ENCODE measurements at regions of chr6 and their contacts with region 1.

Region 1: GRCh38 chr6:5517796-5518195 is 256.5 kb downstream of the FARS2 start:
- DNase-seq: peak; percentile 72
- H3K4me3 Mint-ChIP-seq: no peak overlapping the region
- H3K27ac Mint-ChIP-seq: peak overlapping the region; percentile 53
- H3K4me1 Mint-ChIP-seq: peaks cover 60% of the 10 kb centered on the region
- H3K27me3 Mint-ChIP-seq: no peaks in the 10 kb centered on the region

Region 2: GRCh38 chr6:5278047-5278446 is 239.7 kb before region 1 on chr6:
- CTCF ChIA-PET with region 1: no interaction called
- intact Hi-C with region 1: no loop called
- DNase-seq: no peak
- H3K4me3 Mint-ChIP-seq: no peak overlapping the region
- H3K27ac Mint-ChIP-seq: peak overlapping the region; percentile 9
- H3K4me1 Mint-ChIP-seq: peaks cover 39% of the 10 kb centered on the region
- H3K27me3 Mint-ChIP-seq: no peaks in the 10 kb centered on the region

Region 3: GRCh38 chr6:5481033-5481432 is 36.8 kb before region 1 on chr6:
- CTCF ChIA-PET with region 1: no interaction called
- intact Hi-C with region 1: no loop called
- DNase-seq: no peak
- H3K4me3 Mint-ChIP-seq: no peak overlapping the region
- H3K27ac Mint-ChIP-seq: no peak overlapping the region
- H3K4me1 Mint-ChIP-seq: peaks cover 2% of the 10 kb centered on the region
- H3K27me3 Mint-ChIP-seq: no peaks in the 10 kb centered on the region

Region 4: GRCh38 chr6:5566718-5567117 is 48.9 kb after region 1 on chr6:
- CTCF ChIA-PET with region 1: no interaction called
- intact Hi-C with region 1: loop called (anchors 5 kb)
- DNase-seq: no peak
- H3K4me3 Mint-ChIP-seq: no peak overlapping the region
- H3K27ac Mint-ChIP-seq: no peak overlapping the region
- H3K4me1 Mint-ChIP-seq: peaks cover 32% of the 10 kb centered on the region
- H3K27me3 Mint-ChIP-seq: no peaks in the 10 kb centered on the region

Region 5: DNA sequence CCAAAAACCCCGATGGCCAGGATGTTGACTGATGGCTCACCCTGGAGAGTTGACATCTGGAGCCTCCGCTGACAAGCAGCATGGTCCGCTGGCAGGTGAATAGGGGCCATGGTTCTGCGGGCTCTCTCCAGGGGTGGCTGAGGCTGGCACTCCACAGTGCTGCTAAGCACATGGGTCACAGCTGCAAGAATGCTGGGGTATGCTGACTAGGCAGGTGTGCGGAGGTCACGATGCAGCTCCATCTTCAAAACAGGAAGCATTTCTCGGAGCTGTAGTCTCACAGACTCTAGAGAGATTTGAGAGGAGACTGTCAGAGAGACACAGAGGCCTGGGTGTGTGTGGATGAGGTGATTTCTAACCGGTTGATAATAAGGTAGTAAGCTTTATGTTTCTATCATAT is 147.4 kb after region 1 on chr6:
- CTCF ChIA-PET with region 1: no interaction called
- intact Hi-C with region 1: loop called (anchors 5 kb)
- DNase-seq: peak; percentile 57
- H3K4me3 Mint-ChIP-seq: peak overlapping the region; percentile 46
- H3K27ac Mint-ChIP-seq: peak overlapping the region; percentile 71
- H3K4me1 Mint-ChIP-seq: peaks cover 59% of the 10 kb centered on the region
- H3K27me3 Mint-ChIP-seq: no peaks in the 10 kb centered on the region